BJ (cell line): ENCODE measurements at regions of chr16 and their contacts with region 1.

Region 1: GRCh38 chr16:87778830-87779579 is 13.2 kb upstream of the KLHDC4 start:
- DNase-seq: peak; percentile 87
- H3K4me3 ChIP-seq: no peak overlapping the region
- H3K27me3 ChIP-seq: no peaks in the 10 kb centered on the region
- CTCF ChIP-seq: peak; percentile 98

Region 2: GRCh38 chr16:87790278-87791032 is 11.4 kb after region 1 on chr16:
- CTCF ChIA-PET with region 1: interaction called, 10 read pairs
- POLR2A ChIA-PET with region 1: no interaction called
- DNase-seq: no peak
- H3K4me3 ChIP-seq: no peak overlapping the region
- H3K27me3 ChIP-seq: no peaks in the 10 kb centered on the region; the same call in none of the 2 replicates
- CTCF ChIP-seq: no peak

Region 3: DNA sequence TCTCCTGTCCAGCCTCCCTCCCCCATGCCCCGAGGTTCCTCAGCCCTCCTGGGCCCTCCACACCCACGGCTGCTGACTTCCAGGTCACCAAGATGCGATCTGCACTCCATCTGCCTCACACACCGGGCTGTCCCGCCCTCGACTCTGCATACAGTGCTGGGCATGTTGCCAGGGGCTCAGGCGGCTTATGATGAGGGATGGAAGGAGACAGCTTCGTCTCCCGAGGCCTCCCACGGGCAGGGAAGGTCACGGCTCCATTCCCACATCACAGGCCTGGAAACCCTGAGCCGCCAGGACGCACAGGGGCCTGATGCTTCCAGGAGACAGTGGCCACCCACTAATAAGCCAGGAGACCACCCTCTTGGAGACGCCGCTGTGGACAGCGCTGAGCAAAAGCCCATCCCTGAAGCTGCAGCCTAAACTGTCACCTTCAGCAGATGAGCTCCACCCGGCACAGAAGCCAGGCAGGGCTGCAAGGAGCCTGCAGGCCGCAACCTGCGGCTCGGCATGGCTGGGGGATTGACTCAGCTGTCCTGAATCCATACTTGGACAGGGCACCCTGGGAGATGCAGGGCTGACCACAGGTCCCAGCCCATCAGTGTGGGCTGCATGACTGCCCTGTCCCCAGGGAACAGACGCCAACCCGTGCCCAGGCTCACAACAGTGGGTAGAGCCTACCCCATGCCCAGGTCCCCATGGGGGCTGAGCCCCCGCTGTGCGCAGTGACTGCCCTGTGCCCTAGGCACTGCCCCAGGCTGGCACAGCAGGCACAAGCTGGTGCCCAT is 55.8 kb after region 1 on chr16:
- CTCF ChIA-PET with region 1: interaction called, 19 read pairs
- POLR2A ChIA-PET with region 1: no interaction called
- DNase-seq: no peak
- H3K4me3 ChIP-seq: no peak overlapping the region
- H3K27me3 ChIP-seq: no peaks in the 10 kb centered on the region
- CTCF ChIP-seq: no peak

Region 4: DNA sequence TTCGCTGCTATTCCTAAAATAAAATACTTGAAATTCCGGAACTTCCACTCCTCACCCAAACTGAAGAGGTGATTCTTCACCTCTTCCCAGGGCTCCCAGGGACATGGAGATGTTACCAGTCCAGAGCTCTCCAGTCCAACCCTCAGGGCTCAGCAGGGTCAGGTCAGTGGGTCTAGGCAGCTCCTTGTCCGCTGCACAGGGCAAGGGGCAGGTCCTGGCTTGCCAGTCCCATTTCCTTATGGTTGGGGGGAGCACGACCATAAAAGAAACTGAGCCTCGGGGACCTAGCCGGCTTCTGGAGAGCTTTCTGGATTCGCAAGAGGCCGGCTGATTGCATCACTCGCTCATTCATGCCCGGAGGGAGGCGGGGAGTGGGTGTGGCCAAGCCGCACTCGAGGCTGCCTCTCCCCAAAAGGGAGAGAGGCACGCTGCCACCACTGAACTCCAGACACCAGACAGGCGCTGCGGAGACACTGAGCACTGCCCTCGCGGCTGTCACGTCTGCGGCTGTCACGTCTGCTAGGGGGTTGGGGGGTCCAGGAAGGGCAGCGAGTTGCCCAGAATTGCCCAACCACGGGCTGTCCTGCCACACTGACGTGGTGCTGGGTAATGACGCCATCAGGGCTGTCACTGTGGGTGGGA is 74.5 kb after region 1 on chr16:
- CTCF ChIA-PET with region 1: interaction called, 44 read pairs
- POLR2A ChIA-PET with region 1: no interaction called
- DNase-seq: peak; percentile 80
- H3K4me3 ChIP-seq: peak overlapping the region; percentile 20; the same call in 1 of the 2 replicates
- H3K27me3 ChIP-seq: no peaks in the 10 kb centered on the region
- CTCF ChIP-seq: no peak

Region 5: DNA sequence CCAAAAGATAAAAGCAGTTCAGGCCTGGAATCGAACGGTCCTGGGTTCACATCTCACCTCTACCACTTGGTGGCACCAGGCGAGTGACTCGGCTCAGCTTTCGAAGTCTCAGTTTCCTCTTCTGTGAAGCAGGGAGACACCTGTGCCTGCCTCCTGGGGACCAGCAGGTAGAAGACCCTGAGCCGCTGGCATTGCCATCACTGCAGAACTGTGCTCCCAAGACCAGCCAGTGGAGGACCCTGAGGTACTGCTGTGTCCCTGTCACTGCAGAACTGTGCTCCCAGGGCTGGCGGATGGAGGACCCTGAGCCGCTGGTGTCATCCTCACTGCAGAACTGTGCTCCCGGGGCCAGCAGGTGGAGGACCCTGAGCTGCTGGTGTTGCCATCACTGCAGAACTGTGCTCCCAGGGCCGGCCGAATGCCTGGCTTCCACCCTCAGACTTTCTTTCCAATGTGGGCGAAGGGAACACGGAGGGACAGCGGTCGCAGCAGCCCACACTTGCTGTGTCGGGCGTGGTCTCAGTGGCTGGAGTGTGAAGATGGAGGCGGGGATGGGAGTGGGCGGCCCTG is 99.0 kb after region 1 on chr16:
- CTCF ChIA-PET with region 1: interaction called, 172 read pairs
- POLR2A ChIA-PET with region 1: no interaction called
- DNase-seq: no peak
- H3K4me3 ChIP-seq: no peak overlapping the region
- H3K27me3 ChIP-seq: peaks cover 12% of the 10 kb centered on the region; the same call in 1 of the 2 replicates
- CTCF ChIP-seq: peak; percentile 21; the same call in 1 of the 2 replicates